ENCODE measurements at regions of chr20 and their contacts with region 1.

Region 1: DNA sequence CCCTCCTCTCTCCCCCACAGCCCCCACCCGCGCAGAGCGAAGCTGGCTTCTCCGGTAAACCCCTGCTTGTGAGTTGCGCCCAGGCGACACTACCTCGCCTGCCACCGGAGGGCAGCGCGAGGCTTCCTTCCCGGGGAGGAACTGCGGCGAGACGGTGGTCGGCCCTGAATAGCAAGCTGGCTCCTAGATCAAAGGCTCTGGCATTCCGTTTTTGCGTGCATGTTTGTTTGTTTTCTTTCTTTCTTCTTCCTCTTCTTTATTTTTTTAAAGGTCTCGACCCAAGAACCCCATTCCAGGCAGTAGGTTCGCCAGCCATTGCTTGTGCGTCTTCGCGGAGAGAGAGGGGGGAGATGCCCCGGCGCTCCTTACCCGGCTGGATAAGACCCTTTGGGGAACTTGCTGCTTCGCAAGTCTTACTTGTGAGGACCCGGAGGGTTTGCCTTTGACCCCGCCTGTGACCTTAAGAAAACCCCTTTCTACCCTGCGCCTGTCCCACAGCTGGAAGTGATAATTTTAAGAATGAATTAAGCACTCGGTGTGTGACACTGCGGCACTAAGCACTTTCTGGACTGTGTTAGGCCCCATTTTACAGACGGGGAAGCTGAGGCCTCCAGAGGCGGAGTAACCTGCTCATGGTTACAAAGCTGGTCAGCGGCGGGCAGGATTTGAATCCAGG is 92.7 kb upstream of the SIRPA start:
- DNase-seq: no peak
- H3K4me3 ChIP-seq: peak overlapping the region; percentile 45
- H3K27me3 ChIP-seq: 0 out of 2 replicates have a peak, but pooled peaks cover 1% of the 10 kb centered on the region
- CTCF ChIP-seq: peak; percentile 82

Region 2: DNA sequence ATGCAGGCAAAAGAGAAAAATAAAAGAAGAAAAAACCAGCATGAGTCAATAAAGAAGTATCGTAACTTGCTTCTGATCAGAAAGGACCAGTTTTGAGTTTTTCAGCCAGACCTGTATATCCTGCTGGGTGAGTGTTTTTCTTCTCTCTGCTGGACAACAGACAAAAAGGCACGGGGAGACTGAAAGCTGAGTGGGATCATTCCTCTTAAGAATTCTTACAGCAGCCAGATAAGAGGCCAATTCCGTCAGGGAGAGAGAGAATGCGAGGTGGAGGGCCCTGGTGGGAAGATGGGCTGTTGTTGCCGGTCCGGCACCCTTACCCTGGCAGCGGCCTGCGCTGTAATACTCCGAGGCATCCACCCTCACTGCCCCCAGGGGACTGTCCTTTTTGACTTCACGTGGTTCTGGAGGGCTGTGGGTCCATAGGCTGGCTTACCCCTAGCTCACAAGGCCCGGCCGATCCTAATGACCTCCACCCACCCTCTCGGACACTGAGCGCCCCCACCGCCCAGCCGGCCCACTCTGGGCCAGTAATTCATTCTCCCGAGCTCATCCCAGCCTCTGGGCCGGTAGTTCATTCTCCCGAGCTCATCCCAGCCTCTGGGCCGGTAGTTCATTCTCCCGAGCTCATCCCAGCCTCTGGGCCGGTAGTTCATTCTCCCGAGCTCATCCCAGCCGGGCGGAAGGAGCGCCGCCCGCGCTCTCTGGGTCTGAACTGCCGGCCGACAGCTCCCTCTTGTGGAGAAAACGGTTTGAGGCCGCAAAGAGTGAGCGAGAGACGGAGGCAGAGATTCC is 25.6 kb before region 1 on chr20:
- CTCF ChIA-PET with region 1: interaction called, 21 read pairs
- POLR2A ChIA-PET with region 1: no interaction called
- DNase-seq: no peak
- H3K4me3 ChIP-seq: peak overlapping the region; percentile 76
- H3K27me3 ChIP-seq: peaks cover 5% of the 10 kb centered on the region
- CTCF ChIP-seq: peak; percentile 85

Region 3: GRCh38 chr20:1816384-1817381 is 14.2 kb after region 1 on chr20:
- CTCF ChIA-PET with region 1: interaction called, 12 read pairs
- POLR2A ChIA-PET with region 1: no interaction called
- DNase-seq: peak; percentile 73
- H3K4me3 ChIP-seq: no peak overlapping the region
- H3K27me3 ChIP-seq: no peaks in the 10 kb centered on the region
- CTCF ChIP-seq: no peak

Measured in BJ (cell line).